ENCODE measurements at regions of chr4 and their contacts with region 1.

Region 1: DNA sequence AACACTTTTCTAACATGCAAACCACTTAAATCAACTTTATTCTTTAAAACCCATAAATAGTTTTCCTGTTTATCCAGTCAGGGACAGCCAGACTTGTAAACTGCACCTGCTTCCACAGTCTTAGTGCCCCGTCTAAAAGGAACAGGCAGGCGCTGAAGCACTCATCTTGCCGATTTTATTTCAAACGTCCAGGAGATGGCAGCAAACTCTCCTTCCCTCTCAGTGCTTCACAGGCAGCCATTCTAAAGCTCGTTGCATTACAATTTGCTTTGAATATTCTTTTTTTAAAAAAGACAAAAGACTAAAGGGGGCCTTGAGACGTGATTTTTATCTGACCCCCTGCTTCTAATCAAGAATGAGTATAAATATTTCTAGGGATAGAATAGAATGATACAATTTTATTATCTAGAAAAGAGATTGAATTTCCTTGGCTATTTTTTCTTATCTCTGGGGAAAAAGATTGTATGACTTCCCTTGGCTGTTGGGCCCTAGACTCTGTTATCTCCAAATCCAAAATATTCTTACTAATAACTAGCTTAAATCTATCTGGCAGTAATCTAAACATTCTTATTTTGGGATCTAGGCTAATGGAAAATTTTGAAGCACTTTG is 93.6 kb upstream of the MYOZ2 start:
- DNase-seq: peak in 5 of 10 donors; percentile 34 to 75 (median 50)

Region 2: DNA sequence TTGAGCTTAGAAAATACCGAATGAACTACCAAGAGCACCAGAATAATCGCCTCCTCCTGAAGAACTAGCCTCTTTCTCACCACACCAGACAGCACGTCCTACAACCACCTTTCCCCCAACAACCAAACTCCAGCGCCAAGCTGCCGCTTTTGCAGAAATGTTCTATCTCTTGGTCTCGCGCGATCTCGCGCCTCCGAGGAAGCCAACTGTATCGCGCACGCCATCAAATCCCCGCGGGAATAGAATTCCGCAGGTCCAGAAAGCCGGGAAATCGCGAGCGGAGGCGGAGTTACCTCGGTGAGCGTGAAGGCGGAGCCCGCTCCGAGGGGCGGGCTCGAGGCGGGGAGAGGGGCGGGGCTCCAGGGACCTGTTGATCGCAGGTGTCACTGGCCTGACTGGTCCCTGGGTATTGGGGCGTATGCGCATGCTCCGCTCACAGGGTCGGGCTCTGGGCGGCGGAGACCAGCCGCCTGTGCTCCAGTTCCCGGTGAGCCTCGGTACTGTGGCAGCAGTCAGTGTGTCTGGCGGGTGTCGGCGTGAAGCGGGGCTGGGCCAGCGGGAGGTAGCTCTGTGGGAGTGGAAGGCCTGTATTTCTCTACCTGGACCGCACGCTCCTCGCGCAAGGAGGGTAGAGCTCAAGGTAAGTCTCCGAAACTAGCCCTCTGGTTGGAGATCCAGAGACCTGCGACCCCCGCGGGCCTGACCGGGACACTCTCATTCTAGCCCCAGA is 170.3 kb after region 1 on chr4 and contains the start of gene USP53:
- intact Hi-C with region 1: loop called (anchors 10 kb)
- DNase-seq: peak; percentile 82 to 99 (median 94)

Region 3: GRCh38 chr4:119286377-119287002 is 244.4 kb after region 1 on chr4:
- intact Hi-C with region 1: loop called (anchors 2 kb)
- DNase-seq: no peak